Activated naive CD4-positive, alpha-beta T cell treated with anti-CD3 and anti-CD28 coated beads for 36 hours (primary cell): ENCODE measurements at regions of chr17 and their contacts with region 1.

Region 1: GRCh38 chr17:58631523-58632323 is 60.1 kb downstream of the TEX14 start:
- DNase-seq: peak; percentile 98
- H3K4me3 Mint-ChIP-seq: no peak overlapping the region
- H3K27ac Mint-ChIP-seq: no peak overlapping the region
- H3K4me1 Mint-ChIP-seq: peaks cover 3% of the 10 kb centered on the region
- H3K27me3 Mint-ChIP-seq: no peaks in the 10 kb centered on the region

Region 2: DNA sequence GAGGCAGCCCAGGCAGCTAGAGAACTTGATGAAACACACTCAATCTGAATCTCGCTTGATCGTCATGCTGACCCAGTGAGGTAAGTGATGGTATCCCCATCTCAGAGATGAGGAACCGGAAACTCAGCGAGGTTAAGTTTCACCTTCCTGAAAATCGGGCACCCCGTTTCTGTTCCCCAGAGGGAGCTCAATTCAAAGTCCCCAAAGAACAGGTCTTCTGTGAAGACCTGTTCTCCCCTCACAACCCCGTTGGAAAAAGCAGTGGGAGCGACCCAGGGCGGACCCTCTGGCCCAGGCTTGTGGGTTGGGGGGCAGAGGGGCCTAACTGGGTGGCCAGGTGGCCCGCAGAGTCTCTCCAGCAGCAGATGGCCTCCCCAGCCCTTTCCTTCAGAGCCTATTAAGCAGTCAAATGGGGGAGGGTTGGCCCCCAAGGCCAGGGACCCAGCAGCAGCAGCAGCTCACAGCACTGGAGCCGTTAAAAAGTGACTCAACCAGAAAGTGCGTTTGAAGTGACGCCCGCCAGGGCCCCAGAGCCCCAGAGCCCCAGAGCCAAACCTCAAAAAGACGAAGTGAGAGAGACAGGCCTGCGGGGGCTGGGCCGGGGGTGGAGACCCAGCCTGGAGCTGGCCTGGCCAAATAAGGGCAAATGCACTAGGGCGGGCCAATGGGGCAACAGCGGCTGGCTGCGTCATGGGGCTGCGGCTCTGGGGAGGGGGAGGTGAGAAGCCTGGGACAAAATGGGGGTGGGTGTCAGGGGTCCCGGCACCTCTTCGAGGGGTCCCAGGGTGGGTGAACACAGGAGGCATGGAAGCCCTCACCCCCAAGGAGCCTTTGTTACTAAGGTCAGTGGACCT is 293.9 kb before region 1 on chr17:
- CTCF ChIA-PET with region 1: no interaction called
- intact Hi-C with region 1: loop called (anchors 5 kb)
- DNase-seq: peak; percentile 98
- H3K4me3 Mint-ChIP-seq: peak overlapping the region; percentile 92
- H3K27ac Mint-ChIP-seq: peak overlapping the region; percentile 99
- H3K4me1 Mint-ChIP-seq: peaks cover 7% of the 10 kb centered on the region
- H3K27me3 Mint-ChIP-seq: no peaks in the 10 kb centered on the region

Region 3: DNA sequence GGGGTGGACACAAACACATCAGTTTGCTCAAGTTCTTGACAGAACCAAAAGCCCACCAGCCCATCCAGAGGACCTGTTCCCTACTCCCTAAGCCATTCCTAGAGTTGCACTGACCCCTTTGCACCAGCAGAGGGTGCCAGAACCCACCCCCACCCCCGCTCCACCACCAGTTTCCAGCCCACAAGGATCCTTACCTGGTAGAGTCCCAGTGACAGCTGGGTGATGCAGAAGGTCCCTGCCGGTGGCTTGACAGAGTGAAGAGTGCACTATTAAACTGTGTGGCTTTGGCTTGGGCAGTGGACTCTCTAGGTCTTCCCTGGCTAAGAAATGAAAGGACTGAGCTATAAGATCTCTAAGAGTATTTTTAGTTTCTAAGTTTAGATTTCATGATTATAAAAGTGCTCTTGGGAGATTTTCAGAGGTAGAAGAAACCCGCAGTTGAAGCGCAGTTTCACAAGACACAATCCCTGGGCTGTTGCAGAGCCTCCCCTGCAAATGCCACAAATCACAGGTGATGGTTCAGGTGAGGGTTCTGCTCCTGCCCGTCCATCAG is 43.9 kb before region 1 on chr17:
- CTCF ChIA-PET with region 1: interaction called, 7 read pairs
- intact Hi-C with region 1: loop called (anchors 1 kb)
- DNase-seq: peak; percentile 76
- H3K4me3 Mint-ChIP-seq: no peak overlapping the region
- H3K27ac Mint-ChIP-seq: no peak overlapping the region
- H3K4me1 Mint-ChIP-seq: peaks cover 2% of the 10 kb centered on the region
- H3K27me3 Mint-ChIP-seq: no peaks in the 10 kb centered on the region

Region 4: GRCh38 chr17:58605986-58606385 is 25.7 kb before region 1 on chr17:
- CTCF ChIA-PET with region 1: no interaction called
- intact Hi-C with region 1: no loop called
- DNase-seq: no peak
- H3K4me3 Mint-ChIP-seq: no peak overlapping the region
- H3K27ac Mint-ChIP-seq: no peak overlapping the region
- H3K4me1 Mint-ChIP-seq: peaks cover 5% of the 10 kb centered on the region
- H3K27me3 Mint-ChIP-seq: no peaks in the 10 kb centered on the region

Region 5: DNA sequence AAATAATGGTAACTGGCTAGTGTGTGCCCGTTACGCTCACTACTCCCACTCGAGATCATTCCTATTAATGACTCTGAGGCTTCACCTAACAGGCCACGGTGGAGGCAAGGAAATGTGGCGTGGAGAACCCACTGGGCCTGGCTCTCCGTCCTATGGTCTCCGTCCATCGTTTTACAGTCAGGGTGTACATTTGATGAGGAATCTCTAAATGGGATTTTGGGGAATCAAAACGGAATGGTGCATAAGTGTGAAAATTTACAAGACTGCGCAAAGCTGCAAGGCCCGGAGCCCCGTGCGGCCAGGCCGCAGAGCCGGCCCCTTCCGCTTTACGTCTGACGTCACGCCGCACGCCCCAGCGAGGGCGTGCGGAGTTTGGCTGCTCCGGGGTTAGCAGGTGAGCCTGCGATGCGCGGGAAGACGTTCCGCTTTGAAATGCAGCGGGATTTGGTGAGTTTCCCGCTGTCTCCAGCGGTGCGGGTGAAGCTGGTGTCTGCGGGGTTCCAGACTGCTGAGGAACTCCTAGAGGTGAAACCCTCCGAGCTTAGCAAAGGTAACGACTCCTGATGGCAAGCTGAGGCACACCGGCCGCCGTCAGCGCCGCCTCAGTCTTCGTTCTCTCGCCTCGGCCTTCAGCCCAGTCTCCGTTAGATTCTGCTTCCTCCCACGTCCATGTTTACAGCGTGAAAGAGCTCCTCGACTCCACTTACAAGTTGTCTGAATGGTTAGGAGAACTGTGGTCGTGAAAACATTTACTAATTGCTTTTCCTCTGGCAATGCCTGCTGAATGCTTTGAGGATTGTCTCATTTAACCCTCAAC is 60.7 kb after region 1 on chr17 and contains the start of gene RAD51C:
- CTCF ChIA-PET with region 1: interaction called, 3 read pairs
- intact Hi-C with region 1: loop called (anchors 1 kb)
- DNase-seq: peak; percentile 92
- H3K4me3 Mint-ChIP-seq: peak within 1 kb of the TSS; percentile 91
- H3K27ac Mint-ChIP-seq: peak within 1 kb of the TSS; percentile 93
- H3K4me1 Mint-ChIP-seq: peaks cover 31% of the 10 kb centered on the region
- H3K27me3 Mint-ChIP-seq: no peaks in the 10 kb centered on the region
- total RNA-seq, gene RAD51C: 57.7 to 64.6 TPM

Region 6: DNA sequence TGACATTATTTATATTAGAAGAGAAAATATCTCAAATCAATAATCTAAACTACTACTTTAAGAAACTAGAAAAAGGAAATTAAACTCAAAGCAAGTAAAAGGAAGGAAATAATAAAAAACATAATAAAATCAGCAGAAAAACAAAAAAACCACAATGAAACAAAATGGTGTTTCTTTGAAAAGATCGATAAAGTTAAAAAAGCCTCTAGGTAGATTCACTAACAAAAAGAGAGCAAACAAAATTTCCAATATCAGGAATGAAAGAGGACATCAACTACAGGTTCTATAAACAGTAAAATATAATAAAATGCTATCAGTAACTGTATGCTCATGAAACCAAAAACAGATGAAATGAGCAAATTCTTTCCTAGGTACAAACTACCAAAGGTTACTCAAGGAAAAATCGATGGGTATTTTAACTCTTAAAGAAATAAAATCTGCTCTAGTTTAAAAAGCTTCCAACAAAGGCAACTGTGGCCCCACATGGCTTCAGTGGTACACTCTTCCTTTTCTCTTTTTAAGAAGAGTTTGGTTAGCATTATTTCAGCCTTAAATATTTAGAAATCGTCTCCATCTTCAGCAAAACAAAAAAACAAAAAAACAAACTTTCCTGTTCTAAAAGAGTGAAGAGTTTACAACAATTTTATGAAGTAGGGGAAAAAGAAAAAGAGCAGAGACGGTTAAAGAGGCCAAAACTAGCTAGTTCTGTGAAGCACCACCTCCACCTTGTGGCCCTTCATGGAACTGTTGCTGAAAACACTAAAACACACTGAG is 372.8 kb after region 1 on chr17:
- CTCF ChIA-PET with region 1: interaction called, 3 read pairs
- intact Hi-C with region 1: loop called (anchors 1 kb)
- DNase-seq: peak; percentile 86
- H3K4me3 Mint-ChIP-seq: no peak overlapping the region
- H3K27ac Mint-ChIP-seq: peak overlapping the region; percentile 61
- H3K4me1 Mint-ChIP-seq: peaks cover 28% of the 10 kb centered on the region
- H3K27me3 Mint-ChIP-seq: no peaks in the 10 kb centered on the region

Region 7: GRCh38 chr17:59565171-59565969 is 933.6 kb after region 1 on chr17 and contains the start of gene DHX40:
- CTCF ChIA-PET with region 1: no interaction called
- intact Hi-C with region 1: loop called (anchors 5 kb)
- DNase-seq: peak; percentile 98
- H3K4me3 Mint-ChIP-seq: peak within 1 kb of the TSS; percentile 100
- H3K27ac Mint-ChIP-seq: peak within 1 kb of the TSS; percentile 98
- H3K4me1 Mint-ChIP-seq: peaks cover 21% of the 10 kb centered on the region
- H3K27me3 Mint-ChIP-seq: no peaks in the 10 kb centered on the region
- total RNA-seq, gene DHX40: 14.2 to 15.3 TPM